PC-9 (cell line): ENCODE measurements at regions of chr7 and their contacts with region 1.

Region 1: DNA sequence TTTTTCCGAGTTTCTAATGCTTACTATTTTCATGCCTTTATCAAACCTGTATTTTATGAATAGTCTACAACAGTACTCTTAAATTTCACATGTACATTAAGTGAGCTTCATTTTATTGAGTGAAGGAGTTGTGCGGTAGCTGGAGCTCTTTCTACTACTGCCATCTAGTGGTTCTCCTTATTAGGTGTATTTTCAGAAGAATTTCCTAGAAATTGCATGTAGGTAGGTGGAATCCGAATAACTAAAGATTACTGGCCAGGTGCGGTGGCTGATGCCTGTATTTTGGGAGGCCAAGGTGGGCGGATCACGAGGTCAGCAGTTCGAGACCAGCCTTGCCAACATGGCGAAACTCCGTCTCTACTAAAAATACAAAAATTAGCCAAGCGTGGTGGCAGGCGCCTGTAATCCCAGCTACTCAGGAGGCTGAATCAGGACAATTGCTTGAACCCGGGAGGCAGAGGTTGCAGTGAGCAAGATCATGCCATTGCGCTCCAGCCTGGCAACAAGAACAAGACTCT is 38.3 kb downstream of the LRRC72 start:
- DNase-seq: peak; percentile 30 to 70
- H3K4me3 ChIP-seq: no peak overlapping the region
- H3K27ac ChIP-seq: no peak overlapping the region
- H3K4me1 ChIP-seq: no peaks in the 10 kb centered on the region
- H3K27me3 ChIP-seq: no peaks in the 10 kb centered on the region
- CTCF ChIP-seq: peak; percentile 96

Region 2: DNA sequence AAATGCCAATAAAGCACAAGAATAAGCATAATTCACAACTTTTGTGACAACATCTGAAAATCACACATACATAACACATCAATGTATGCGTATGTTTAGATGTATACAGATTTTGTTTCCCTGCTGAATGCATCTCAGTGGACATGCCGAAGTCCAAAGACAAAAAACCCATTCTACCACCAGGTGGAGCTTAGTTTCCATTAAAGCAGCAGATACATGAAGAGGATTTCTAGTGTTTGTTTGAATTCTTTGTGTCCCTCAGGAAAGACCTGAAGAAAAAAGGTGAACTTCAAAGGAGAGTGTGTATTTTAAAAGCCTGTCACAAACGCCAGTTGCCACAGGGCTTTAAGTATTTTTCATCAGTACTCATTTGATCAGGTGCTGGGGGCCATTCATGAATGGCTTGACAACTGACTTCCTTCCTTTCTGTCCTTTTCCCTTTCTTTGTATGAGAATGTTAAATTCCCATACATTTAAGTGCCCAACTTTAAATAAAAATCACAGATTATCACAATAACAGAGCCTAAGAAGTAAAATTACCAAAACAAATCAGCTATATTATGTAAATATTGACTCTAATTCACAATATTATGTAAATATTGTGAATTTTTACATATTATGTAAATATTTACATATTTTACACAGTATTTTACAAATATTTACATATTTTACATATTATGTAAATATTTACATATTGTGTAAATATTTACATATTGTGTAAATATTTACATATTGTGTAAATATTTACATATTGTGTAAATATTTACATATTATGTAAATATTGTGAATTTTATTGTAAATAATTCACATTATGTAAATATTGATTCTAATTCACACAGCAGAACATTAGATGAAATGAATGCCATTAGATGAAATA is 486.7 kb before region 1 on chr7:
- CTCF ChIA-PET with region 1: interaction called, 9 read pairs
- POLR2A ChIA-PET with region 1: no interaction called
- intact Hi-C with region 1: loop called (anchors 1 kb)
- DNase-seq: peak; percentile 55 to 69
- H3K4me3 ChIP-seq: no peak overlapping the region
- H3K27ac ChIP-seq: no peak overlapping the region
- H3K4me1 ChIP-seq: no peaks in the 10 kb centered on the region
- H3K27me3 ChIP-seq: no peaks in the 10 kb centered on the region
- CTCF ChIP-seq: peak; percentile 93

Region 3: GRCh38 chr7:16129431-16130116 is 435.4 kb before region 1 on chr7:
- CTCF ChIA-PET with region 1: interaction called, 3 read pairs
- POLR2A ChIA-PET with region 1: interaction called, 6 read pairs
- intact Hi-C with region 1: loop called (anchors 1 kb)
- DNase-seq: peak; percentile 46 to 95
- H3K4me3 ChIP-seq: peak overlapping the region; percentile 17
- H3K27ac ChIP-seq: peak overlapping the region; percentile 90
- H3K4me1 ChIP-seq: peaks cover 35% of the 10 kb centered on the region
- H3K27me3 ChIP-seq: no peaks in the 10 kb centered on the region
- CTCF ChIP-seq: no peak

Region 4: DNA sequence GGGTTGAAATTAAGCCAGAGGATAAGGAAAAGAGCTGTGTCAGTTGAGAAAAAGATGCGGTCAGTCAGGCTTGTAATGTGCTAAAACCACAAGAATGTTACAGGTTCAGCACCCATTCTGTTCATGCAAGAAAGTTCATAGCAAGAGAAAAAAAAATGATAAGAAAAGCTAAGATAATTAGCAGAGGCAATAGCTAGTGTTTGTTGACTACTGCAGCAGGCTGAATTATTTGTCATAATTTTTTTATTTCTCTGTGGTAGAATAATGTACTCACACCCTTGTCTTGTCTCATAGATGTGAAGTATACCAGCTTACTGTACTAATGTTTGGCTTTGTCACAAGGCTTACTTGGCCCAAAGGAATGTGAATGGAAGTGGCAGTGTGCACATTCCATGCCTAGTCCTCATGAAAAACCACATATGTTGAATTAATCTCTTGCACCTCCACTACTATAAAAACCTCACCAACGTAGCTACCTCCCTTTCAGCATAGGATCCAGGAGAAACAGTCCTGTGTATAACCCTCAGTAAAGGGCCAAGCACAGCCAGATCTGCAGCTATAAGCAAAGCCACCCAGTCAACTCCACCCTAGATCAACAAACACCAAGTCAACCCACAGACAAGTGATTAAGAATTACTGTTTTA is 218.5 kb before region 1 on chr7:
- CTCF ChIA-PET with region 1: interaction called, 10 read pairs
- POLR2A ChIA-PET with region 1: interaction called, 5 read pairs
- intact Hi-C with region 1: loop called (anchors 1 kb)
- DNase-seq: peak; percentile 60 to 98
- H3K4me3 ChIP-seq: no peak overlapping the region; the same call in 1 of the 2 replicates
- H3K27ac ChIP-seq: peak overlapping the region; percentile 80
- H3K4me1 ChIP-seq: peaks cover 37% of the 10 kb centered on the region
- H3K27me3 ChIP-seq: no peaks in the 10 kb centered on the region
- CTCF ChIP-seq: no peak

Region 5: DNA sequence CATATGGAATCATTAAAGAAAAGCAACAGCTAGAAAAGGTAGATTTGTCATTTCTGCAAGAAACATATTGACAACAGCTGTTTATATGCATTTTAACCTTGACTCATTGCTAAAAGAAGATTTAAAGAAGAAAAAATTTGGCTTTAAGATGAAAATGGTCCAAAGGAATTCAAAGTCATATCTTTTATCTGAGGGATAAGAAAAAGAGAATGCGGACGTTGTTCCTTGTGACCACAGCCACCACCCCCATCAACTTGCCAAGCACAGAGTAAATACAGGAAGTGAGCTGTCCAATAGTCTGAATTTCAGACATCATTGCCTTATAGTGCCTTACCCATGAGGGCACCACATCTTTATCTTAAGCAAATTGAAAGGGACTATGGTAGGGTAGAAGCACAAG is 136.3 kb before region 1 on chr7:
- CTCF ChIA-PET with region 1: interaction called, 5 read pairs
- POLR2A ChIA-PET with region 1: interaction called, 4 read pairs
- intact Hi-C with region 1: loop called (anchors 2 kb)
- DNase-seq: peak in 1 of 2 experiments; percentile 67
- H3K4me3 ChIP-seq: no peak overlapping the region
- H3K27ac ChIP-seq: no peak overlapping the region
- H3K4me1 ChIP-seq: no peaks in the 10 kb centered on the region
- H3K27me3 ChIP-seq: no peaks in the 10 kb centered on the region
- CTCF ChIP-seq: no peak